ENCODE measurements at regions of chr1 and their contacts with region 1.

Region 1: GRCh38 chr1:38138498-38139233 is 92.1 kb upstream of the POU3F1 start:
- DNase-seq: no peak
- H3K4me3 ChIP-seq: no peak overlapping the region
- H3K27ac ChIP-seq: no peak overlapping the region
- H3K4me1 ChIP-seq: peaks cover 17 to 46% (median 31%) of the 10 kb centered on the region in 4 experiments
- H3K27me3 ChIP-seq: peaks cover 2 to 20% (median 14%) of the 10 kb centered on the region in 4 experiments; a peak in 6 of 7 replicates
- CTCF ChIP-seq: no peak
- EP300 ChIP-seq: no peak
- POLR2A ChIP-seq: no peak
- RAD21 ChIP-seq: no peak

Region 2: GRCh38 chr1:38152351-38153065 is 13.8 kb after region 1 on chr1:
- CTCF ChIA-PET with region 1: interaction called, 30 read pairs
- POLR2A ChIA-PET with region 1: interaction called, 5 read pairs
- DNase-seq: no peak
- H3K4me3 ChIP-seq: no peak overlapping the region
- H3K27ac ChIP-seq: no peak overlapping the region
- H3K4me1 ChIP-seq: peaks cover 2 to 10% (median 6%) of the 10 kb centered on the region in 4 experiments; a peak in 5 of 7 replicates
- H3K27me3 ChIP-seq: no peaks in the 10 kb centered on the region; a peak in 1 of 7 replicates
- CTCF ChIP-seq: peak in 1 of 3 experiments; percentile 22; a peak in 1 of 4 replicates
- EP300 ChIP-seq: no peak
- POLR2A ChIP-seq: no peak
- RAD21 ChIP-seq: no peak; a peak in 1 of 4 replicates

Region 3: GRCh38 chr1:38444311-38444710 is 305.6 kb after region 1 on chr1:
- CTCF ChIA-PET with region 1: no interaction called
- POLR2A ChIA-PET with region 1: no interaction called
- DNase-seq: peak in 1 of 2 experiments; percentile 33
- H3K4me3 ChIP-seq: no peak overlapping the region
- H3K27ac ChIP-seq: no peak overlapping the region
- H3K4me1 ChIP-seq: no peaks in the 10 kb centered on the region; a peak in 1 of 7 replicates
- H3K27me3 ChIP-seq: no peaks in the 10 kb centered on the region
- CTCF ChIP-seq: no peak
- EP300 ChIP-seq: no peak
- POLR2A ChIP-seq: no peak
- RAD21 ChIP-seq: no peak

Measured in H1 (cell line).